HAP-1 (cell line): ENCODE measurements at regions of chr1 and their contacts with region 1.

Region 1: GRCh38 chr1:176897350-176898236 is 266.9 kb downstream of the ASTN1 start:
- DNase-seq: peak; percentile 65 to 84
- H3K4me3 ChIP-seq: no peak overlapping the region
- H3K4me1 ChIP-seq: peaks cover 3% of the 10 kb centered on the region; the same call in 1 of the 2 replicates
- H3K27me3 ChIP-seq: no peaks in the 10 kb centered on the region; the same call in 1 of the 2 replicates

Region 2: DNA sequence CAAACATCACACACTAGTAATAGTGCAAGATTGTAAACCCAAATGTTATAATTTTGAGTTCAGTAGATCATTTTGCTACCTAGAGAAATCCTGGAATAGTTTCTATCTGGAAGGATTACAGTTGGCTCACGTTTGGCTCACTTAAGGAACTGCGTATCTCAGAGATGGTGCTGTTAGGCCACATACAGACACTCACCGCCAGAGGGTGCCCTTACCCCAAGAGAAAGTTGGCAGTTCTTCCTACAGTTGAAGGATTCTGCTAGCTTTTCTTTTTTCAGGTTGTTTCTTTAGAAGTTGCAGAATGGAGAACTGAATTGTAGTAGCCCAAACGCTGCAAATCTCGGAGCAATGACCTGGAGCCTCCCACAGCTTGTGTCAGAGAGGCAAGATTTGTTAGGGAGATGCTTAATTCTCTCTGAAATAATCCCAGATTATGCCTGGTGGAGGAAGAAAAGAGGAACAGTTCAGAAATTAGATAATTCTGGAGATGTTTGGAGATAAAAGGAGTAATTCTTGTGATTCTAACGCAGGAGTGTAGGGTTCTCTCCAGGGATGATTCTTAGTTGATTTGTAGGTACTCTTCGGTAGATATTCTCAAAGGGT is 522.5 kb before region 1 on chr1:
- in situ Hi-C with region 1: loop called (anchors 25 kb)
- DNase-seq: peak; percentile 47 to 84
- H3K4me3 ChIP-seq: no peak overlapping the region
- H3K4me1 ChIP-seq: no peaks in the 10 kb centered on the region
- H3K27me3 ChIP-seq: no peaks in the 10 kb centered on the region

Region 3: DNA sequence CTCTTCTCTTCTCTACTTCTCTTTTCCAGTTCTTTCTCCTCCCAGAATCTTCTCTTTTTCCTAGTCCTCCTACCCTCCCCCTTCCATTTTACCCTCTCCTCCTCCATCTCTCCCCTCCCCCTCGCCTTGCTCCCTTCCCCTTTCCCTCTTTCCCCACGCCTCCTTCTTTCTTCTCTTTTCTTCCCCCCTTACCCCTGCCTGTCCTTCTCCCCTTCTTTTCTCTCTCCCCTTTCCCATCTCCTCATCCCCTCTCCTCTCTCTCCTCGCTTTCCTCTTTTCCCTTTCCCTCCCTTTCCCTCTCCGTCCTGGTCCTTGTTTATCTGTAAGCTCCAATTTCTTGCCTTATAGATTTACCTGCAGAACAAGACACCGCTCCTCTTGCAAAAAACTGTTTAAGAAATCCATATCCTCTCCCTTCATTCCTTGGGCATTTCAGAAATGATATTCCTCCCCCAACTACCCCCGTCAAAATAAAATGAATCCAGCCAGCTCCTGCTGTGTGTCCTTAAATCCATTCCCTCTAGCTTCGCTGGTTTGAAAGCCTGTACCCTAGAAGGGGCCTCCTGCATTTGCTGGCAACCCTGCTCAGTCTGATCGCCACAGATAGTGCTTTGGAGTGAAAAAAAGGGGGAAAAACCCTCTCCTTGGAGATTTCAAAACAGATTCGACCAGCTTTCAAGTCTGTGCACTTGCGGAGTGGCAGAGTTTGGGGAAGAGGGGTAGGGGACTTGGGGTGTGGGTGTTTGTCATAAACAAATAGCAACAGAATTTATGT is 345.2 kb before region 1 on chr1:
- in situ Hi-C with region 1: no loop called
- DNase-seq: no peak
- H3K4me3 ChIP-seq: no peak overlapping the region
- H3K4me1 ChIP-seq: no peaks in the 10 kb centered on the region
- H3K27me3 ChIP-seq: peaks cover 6% of the 10 kb centered on the region; the same call in 1 of the 2 replicates

Region 4: GRCh38 chr1:177780096-177780700 is 882.6 kb after region 1 on chr1:
- in situ Hi-C with region 1: loop called (anchors 25 kb)
- DNase-seq: peak; percentile 13 to 52
- H3K4me3 ChIP-seq: no peak overlapping the region
- H3K4me1 ChIP-seq: no peaks in the 10 kb centered on the region
- H3K27me3 ChIP-seq: no peaks in the 10 kb centered on the region

Region 5: DNA sequence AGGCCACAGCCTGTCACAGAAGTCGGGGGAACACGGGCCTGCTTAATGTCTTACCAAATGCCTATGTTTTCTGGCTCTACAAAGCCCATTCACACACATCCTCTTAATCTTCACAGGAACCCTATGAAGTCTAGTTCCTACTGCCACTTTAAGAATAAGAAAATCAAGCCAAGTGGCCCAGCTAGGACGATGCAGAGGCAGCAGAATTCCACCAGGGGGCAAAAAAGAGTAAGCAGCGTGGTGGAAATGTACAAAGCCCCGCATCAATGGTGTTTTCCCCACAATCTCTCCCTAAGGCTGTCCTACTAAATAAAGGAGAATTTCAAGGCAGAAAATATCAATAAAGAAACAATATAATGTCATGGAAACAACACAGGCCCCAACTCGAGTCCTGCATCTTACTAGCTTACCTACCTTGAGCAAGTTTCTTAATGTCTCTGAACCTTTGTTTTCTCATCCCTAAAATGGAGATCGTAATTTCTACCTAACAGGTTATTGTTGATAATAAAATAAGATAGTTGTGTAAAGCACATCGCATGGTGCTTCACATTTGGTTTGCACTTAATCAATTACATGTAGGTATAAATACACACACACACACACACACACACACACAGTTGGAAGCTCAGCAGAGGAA is 1050.9 kb after region 1 on chr1:
- in situ Hi-C with region 1: loop called (anchors 10 kb)
- DNase-seq: peak; percentile 68 to 76
- H3K4me3 ChIP-seq: no peak overlapping the region
- H3K4me1 ChIP-seq: peaks cover 5% of the 10 kb centered on the region
- H3K27me3 ChIP-seq: no peaks in the 10 kb centered on the region